Heart left ventricle (tissue), 16 donors: ENCODE measurements at regions of chr17 and their contacts with region 1.

Region 1: DNA sequence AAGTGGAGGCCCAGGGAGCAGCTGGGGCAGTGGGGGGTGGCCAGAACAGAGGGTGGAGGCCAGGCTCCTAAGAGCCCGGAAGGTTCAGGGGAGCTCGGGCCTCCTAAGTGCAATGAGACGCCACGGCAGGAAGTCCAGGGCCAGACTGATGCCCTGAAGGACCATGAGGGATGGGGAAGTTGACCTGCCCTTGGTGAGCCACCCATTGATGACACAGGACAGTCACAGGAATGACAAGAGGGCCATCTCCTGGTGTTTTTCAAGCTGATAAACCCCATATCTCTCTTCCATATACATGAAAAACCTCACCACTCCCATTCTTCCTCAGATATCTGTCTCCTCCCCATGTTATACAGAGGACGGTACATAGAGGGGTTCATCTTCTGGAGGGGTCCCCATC is 5.8 kb upstream of the MRPL58 start:
- DNase-seq: no peak
- ATAC-seq: no peak
- H3K4me3 ChIP-seq: no peak overlapping the region
- H3K27ac ChIP-seq: no peak overlapping the region
- H3K4me1 ChIP-seq: peaks cover 0 to 13% (median 8%) of the 10 kb centered on the region in 12 donors
- H3K27me3 ChIP-seq: no peaks in the 10 kb centered on the region
- CTCF ChIP-seq: peak in 1 of 12 donors; percentile 9
- POLR2A ChIP-seq: no peak

Region 2: GRCh38 chr17:74972107-74972972 is 34.3 kb before region 1 on chr17 and contains the start of gene HID1:
- intact Hi-C with region 1: loop called in 2 of 10 experiments (anchors 5 kb)
- DNase-seq: peak; percentile 47 to 87 (median 66)
- ATAC-seq: peak in 3 of 4 donors; percentile 53 to 80 (median 71)
- H3K4me3 ChIP-seq: peak within 1 kb of the TSS; percentile 69 to 95 (median 76)
- H3K27ac ChIP-seq: peak within 1 kb of the TSS; percentile 52 to 81 (median 70)
- H3K4me1 ChIP-seq: peaks cover 0 to 26% (median 12%) of the 10 kb centered on the region in 12 donors
- H3K27me3 ChIP-seq: peaks cover 0 to 25% (median 0%) of the 10 kb centered on the region in 9 donors
- CTCF ChIP-seq: no peak
- POLR2A ChIP-seq: peak in 1 of 2 donors; percentile 20
- total RNA-seq, gene HID1: 5.7 to 15.7 (median 9.8) TPM